ENCODE measurements at regions of chr6 and their contacts with region 1.

Region 1: GRCh38 chr6:41683510-41684310 is 45.4 kb downstream of the MDFI start:
- H3K4me3 ChIP-seq: no peak overlapping the region
- H3K27ac ChIP-seq: no peak overlapping the region
- H3K4me1 ChIP-seq: no peaks in the 10 kb centered on the region
- CTCF ChIP-seq: peak; percentile 94

Region 2: DNA sequence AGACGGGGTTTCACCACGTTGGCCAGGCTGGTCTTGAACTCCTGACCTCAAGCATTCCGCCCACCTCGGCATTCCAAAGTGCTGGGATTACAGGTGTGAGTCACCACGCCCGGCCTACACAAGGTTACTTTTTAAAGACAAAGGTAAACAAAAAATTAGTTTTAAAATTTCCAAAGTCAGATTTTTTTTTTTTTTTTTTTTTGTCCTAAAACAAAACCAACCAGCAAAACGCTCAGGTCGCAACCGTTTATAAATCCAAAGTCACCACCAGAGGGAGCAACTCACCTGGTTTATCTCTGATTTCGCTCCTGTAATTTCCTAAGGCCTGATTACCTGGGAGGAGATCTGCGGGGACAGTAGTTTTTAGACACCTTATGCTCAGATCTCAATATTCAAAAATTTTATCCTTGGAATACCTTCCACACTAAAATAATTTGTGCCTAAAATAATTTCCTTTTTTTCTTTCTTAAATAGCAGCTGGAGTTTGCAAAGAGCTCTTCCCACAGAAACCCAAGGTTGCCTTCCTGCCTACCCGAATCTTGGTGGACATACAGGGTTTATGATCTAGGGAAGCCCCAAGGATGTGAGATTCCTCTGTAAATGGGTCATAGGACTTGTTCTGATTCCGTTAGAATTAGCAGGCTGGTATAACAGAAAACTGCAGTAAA is 377.4 kb before region 1 on chr6:
- CTCF ChIA-PET with region 1: interaction called, 18 read pairs
- POLR2A ChIA-PET with region 1: no interaction called
- H3K4me3 ChIP-seq: no peak overlapping the region
- H3K27ac ChIP-seq: no peak overlapping the region
- H3K4me1 ChIP-seq: no peaks in the 10 kb centered on the region
- CTCF ChIP-seq: no peak

Region 3: GRCh38 chr6:41488433-41489119 is 195.1 kb before region 1 on chr6:
- CTCF ChIA-PET with region 1: no interaction called
- POLR2A ChIA-PET with region 1: no interaction called
- H3K4me3 ChIP-seq: no peak overlapping the region
- H3K27ac ChIP-seq: no peak overlapping the region; the same call in 1 of the 2 replicates
- H3K4me1 ChIP-seq: peaks cover 18% of the 10 kb centered on the region
- CTCF ChIP-seq: no peak

Region 4: GRCh38 chr6:41591859-41592502 is 91.7 kb before region 1 on chr6:
- CTCF ChIA-PET with region 1: interaction called, 20 read pairs
- POLR2A ChIA-PET with region 1: no interaction called
- H3K4me3 ChIP-seq: no peak overlapping the region
- H3K27ac ChIP-seq: no peak overlapping the region
- H3K4me1 ChIP-seq: no peaks in the 10 kb centered on the region; the same call in 1 of the 2 replicates
- CTCF ChIP-seq: peak; percentile 83

Region 5: GRCh38 chr6:41625442-41625841 is 58.3 kb before region 1 on chr6:
- CTCF ChIA-PET with region 1: interaction called, 12 read pairs
- POLR2A ChIA-PET with region 1: interaction called, 3 read pairs
- H3K4me3 ChIP-seq: no peak overlapping the region
- H3K27ac ChIP-seq: no peak overlapping the region
- H3K4me1 ChIP-seq: no peaks in the 10 kb centered on the region; the same call in 1 of the 2 replicates
- CTCF ChIP-seq: no peak

Region 6: GRCh38 chr6:41697861-41698781 is 14.4 kb after region 1 on chr6:
- CTCF ChIA-PET with region 1: interaction called, 20 read pairs
- POLR2A ChIA-PET with region 1: interaction called, 4 read pairs
- H3K4me3 ChIP-seq: no peak overlapping the region
- H3K27ac ChIP-seq: no peak overlapping the region
- H3K4me1 ChIP-seq: no peaks in the 10 kb centered on the region
- CTCF ChIP-seq: no peak

Region 7: GRCh38 chr6:42043787-42044475 is 360.2 kb after region 1 on chr6:
- CTCF ChIA-PET with region 1: interaction called, 21 read pairs
- POLR2A ChIA-PET with region 1: no interaction called
- H3K4me3 ChIP-seq: no peak overlapping the region
- H3K27ac ChIP-seq: no peak overlapping the region
- H3K4me1 ChIP-seq: peaks cover 18% of the 10 kb centered on the region
- CTCF ChIP-seq: peak; percentile 93

Measured in HEK293 (cell line).